ENCODE measurements at regions of chr2 and their contacts with region 1.

Region 1: DNA sequence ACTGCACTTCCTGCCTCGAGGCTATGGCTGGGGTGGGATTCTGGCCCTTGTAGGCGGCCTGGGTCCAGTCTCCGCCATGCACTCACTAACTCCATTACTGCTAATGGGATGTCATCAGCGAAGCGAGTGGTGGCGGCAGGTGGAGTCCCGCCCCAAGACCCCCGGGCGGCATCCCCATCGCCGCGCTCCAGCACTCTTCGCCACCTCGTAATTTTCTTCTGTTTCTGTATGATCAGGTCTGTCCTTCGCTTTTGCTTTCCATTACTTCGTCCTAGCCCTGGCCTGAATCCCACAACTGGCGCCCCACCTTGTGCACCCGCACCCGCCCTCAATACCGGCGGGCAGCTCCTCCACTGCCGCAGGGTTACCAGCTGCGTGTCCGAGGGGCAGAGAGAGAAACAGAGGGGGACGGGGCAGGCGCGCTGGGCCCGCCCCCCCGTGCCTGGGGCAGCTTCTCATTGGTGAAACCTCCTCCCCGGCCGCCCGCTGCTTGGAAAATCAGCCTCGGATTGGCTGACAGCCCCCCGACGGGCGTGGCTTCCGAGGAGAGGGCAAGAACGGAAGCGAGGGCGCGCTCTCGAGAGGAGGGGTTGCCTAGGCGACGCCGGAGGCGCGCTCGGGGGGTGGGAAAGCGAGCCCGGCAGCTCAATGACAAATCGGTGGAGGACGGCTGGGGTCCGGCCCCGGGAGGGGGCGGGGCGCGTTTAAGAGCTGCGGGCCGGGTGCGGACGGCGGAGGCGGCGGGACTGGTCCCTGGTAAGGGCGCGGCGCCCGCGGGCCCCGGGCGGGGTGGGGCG is at the start of gene RALB:
- DNase-seq: peak; percentile 98
- ATAC-seq: peak; percentile 94
- H3K4me3 ChIP-seq: peak within 1 kb of the TSS; percentile 63 to 95 (median 92)
- H3K4me3 Mint-ChIP-seq: peak within 1 kb of the TSS; percentile 98
- H3K27ac ChIP-seq: peak within 1 kb of the TSS; percentile 65 to 73
- H3K27ac Mint-ChIP-seq: peak within 1 kb of the TSS; percentile 96
- H3K4me1 ChIP-seq: peaks cover 51 to 54% of the 10 kb centered on the region in 2 donors
- H3K4me1 Mint-ChIP-seq: peaks cover 60% of the 10 kb centered on the region
- H3K27me3 ChIP-seq: peaks cover 0 to 9% (median 2%) of the 10 kb centered on the region in 4 experiments
- H3K27me3 Mint-ChIP-seq: peaks cover 10% of the 10 kb centered on the region
- CTCF ChIP-seq: no peak
- total RNA-seq, gene RALB: 35.9 and 36.7 TPM in 2 replicates

Region 2: DNA sequence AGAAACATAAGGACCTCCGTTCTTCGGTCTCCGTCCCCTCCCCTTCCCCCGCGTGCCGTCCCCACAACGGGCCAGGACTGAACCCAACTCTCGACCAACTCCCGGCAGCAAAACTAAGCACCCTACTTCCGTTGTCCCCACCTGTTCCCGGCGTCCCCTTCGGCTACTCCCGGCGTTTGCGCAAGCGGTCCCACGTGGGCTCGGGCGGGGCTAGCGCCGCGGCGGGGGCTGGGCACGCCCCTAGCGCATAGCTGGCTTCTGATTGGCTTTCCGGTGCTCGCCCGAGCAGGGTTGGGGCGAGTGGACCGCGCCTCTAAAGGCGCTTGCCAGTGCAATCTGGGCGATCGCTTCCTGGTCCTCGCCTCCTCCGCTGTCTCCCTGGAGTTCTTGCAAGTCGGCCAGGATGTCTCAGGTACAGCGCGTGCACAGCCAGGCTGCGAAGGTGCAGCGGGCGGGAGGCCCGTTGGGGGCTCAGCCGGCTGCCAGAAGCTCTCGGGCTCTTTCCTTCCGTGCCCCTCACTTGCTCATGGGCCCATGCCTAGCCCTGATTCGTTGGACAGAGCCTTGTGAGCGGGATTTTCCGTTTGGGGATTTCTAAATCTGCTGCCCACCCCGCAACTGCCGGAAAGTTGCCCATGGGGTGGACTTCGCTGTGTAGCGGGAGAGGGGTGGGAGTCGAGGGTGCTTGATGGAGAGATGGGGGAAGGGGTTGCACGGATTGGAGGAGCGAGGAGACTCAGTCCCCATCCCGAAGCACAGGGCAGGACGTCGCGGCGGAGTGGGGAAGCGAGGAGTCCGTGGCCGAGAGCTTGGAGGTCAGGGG is 885.6 kb before region 1 on chr2 and contains the starts of genes C2orf76 and DBI:
- CTCF ChIA-PET with region 1: no interaction called
- POLR2A ChIA-PET with region 1: no interaction called
- intact Hi-C with region 1: loop called (anchors 2 kb)
- DNase-seq: peak; percentile 95
- ATAC-seq: peak; percentile 96
- H3K4me3 ChIP-seq: peak within 1 kb of the TSS; percentile 77 to 100 (median 94)
- H3K4me3 Mint-ChIP-seq: peak within 1 kb of the TSS; percentile 99
- H3K27ac ChIP-seq: peak within 1 kb of the TSS; percentile 84 to 91
- H3K27ac Mint-ChIP-seq: peak within 1 kb of the TSS; percentile 92
- H3K4me1 ChIP-seq: peaks cover 26 to 44% of the 10 kb centered on the region in 2 donors
- H3K4me1 Mint-ChIP-seq: peaks cover 57% of the 10 kb centered on the region
- H3K27me3 ChIP-seq: no peaks in the 10 kb centered on the region
- H3K27me3 Mint-ChIP-seq: no peaks in the 10 kb centered on the region
- CTCF ChIP-seq: no peak
- total RNA-seq, gene C2orf76: 11.5 and 13.6 TPM in 2 replicates
- total RNA-seq, gene DBI: 40.3 and 45.2 TPM in 2 replicates

Region 3: DNA sequence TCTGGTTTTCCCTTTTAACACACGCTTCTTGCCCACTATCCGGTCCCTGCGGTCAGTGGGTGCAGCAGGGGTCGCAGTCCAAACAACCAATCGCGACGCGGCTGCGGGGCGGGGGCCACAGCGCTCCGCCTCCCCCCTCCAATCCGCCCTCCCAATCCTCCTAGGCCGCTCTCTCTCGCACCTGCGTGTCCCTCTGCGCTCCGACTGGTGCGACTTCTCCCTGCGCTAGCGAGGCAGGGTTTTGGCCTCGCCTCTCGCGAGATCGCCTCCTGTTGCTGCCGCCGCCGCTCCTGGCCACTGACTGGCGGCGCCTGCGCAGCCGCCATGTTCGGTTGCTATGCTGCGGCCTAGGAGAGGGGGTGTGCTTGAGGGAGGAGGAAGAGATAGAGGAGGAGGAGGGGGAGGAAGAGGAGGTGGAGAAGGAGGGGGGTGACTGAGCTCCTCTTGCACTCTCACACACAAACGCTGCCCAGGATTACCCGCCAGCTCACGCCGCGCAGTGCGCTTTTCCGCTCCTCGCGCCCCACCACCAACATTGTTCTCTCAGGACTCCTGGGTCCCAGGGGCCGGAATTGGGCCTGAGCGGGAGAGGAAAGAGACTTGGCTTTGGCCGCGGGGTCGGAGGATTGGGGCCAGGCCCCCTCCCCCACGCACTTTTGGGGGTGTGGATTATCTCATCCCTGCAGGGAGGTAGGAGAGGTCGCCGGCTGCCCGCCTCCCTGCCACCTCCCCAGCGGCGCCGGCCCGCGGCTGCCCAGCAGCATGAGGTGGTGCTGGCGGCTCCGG is 492.8 kb before region 1 on chr2 and contains the start of gene PTPN4:
- CTCF ChIA-PET with region 1: no interaction called
- POLR2A ChIA-PET with region 1: interaction called, 4 read pairs
- intact Hi-C with region 1: loop called (anchors 1 kb)
- DNase-seq: peak; percentile 99
- ATAC-seq: peak; percentile 87
- H3K4me3 ChIP-seq: peak within 1 kb of the TSS; percentile 77 to 96 (median 88)
- H3K4me3 Mint-ChIP-seq: peak within 1 kb of the TSS; percentile 96
- H3K27ac ChIP-seq: peak within 1 kb of the TSS; percentile 73 to 84
- H3K27ac Mint-ChIP-seq: peak within 1 kb of the TSS; percentile 95
- H3K4me1 ChIP-seq: peaks cover 16 to 28% of the 10 kb centered on the region in 2 donors
- H3K4me1 Mint-ChIP-seq: peaks cover 42% of the 10 kb centered on the region
- H3K27me3 ChIP-seq: no peaks in the 10 kb centered on the region
- H3K27me3 Mint-ChIP-seq: no peaks in the 10 kb centered on the region
- CTCF ChIP-seq: no peak
- total RNA-seq, gene PTPN4: 54.8 and 66.4 TPM in 2 replicates

Region 4: GRCh38 chr2:120223034-120223912 is 29.1 kb before region 1 on chr2 and contains the start of gene TMEM185B:
- CTCF ChIA-PET with region 1: interaction called, 8 read pairs
- POLR2A ChIA-PET with region 1: interaction called, 16 read pairs
- intact Hi-C with region 1: loop called (anchors 1 kb)
- DNase-seq: peak; percentile 93
- ATAC-seq: peak; percentile 96
- H3K4me3 ChIP-seq: peak within 1 kb of the TSS; percentile 68 to 83 (median 71)
- H3K4me3 Mint-ChIP-seq: peak within 1 kb of the TSS; percentile 89
- H3K27ac ChIP-seq: peak within 1 kb of the TSS; percentile 93 to 96
- H3K27ac Mint-ChIP-seq: peak within 1 kb of the TSS; percentile 95
- H3K4me1 ChIP-seq: peaks cover 25 to 31% of the 10 kb centered on the region in 2 donors
- H3K4me1 Mint-ChIP-seq: peaks cover 55% of the 10 kb centered on the region
- H3K27me3 ChIP-seq: no peaks in the 10 kb centered on the region
- H3K27me3 Mint-ChIP-seq: no peaks in the 10 kb centered on the region
- CTCF ChIP-seq: peak; percentile 38
- total RNA-seq, gene TMEM185B: 29.6 TPM in 2 replicates

Region 5: DNA sequence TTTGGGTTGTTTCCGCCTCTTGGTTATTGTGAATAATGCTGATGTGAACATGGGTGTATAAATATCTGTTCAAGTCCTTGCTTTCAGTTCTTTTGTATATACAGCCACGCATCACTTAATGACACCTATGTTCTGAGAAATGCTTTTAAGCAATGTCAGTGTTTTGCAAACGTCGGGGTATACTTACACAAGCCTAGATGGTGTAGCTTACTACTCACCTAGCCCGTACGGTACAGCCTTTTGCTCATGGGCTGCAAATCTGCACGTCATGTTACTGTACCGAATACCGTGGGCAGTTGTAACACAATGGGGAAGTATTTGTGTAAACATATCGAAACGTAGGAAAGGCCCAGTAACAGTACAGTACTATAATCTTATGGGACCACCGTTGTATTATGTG is 12.6 kb after region 1 on chr2:
- CTCF ChIA-PET with region 1: interaction called, 4 read pairs
- POLR2A ChIA-PET with region 1: no interaction called
- intact Hi-C with region 1: loop called (anchors 1 kb)
- DNase-seq: no peak
- ATAC-seq: no peak
- H3K4me3 ChIP-seq: peak overlapping the region in 1 of 5 experiments; percentile 6
- H3K4me3 Mint-ChIP-seq: peak overlapping the region; percentile 60
- H3K27ac ChIP-seq: no peak overlapping the region
- H3K27ac Mint-ChIP-seq: no peak overlapping the region
- H3K4me1 ChIP-seq: peaks cover 37 to 46% of the 10 kb centered on the region in 2 donors
- H3K4me1 Mint-ChIP-seq: peaks cover 38% of the 10 kb centered on the region
- H3K27me3 ChIP-seq: no peaks in the 10 kb centered on the region
- H3K27me3 Mint-ChIP-seq: no peaks in the 10 kb centered on the region
- CTCF ChIP-seq: no peak

Measured in B cell (primary cell).